Activated naive CD4-positive, alpha-beta T cell treated with anti-CD3 and anti-CD28 coated beads for 36 hours (primary cell): ENCODE measurements at regions of chr18 and their contacts with region 1.

Region 1: DNA sequence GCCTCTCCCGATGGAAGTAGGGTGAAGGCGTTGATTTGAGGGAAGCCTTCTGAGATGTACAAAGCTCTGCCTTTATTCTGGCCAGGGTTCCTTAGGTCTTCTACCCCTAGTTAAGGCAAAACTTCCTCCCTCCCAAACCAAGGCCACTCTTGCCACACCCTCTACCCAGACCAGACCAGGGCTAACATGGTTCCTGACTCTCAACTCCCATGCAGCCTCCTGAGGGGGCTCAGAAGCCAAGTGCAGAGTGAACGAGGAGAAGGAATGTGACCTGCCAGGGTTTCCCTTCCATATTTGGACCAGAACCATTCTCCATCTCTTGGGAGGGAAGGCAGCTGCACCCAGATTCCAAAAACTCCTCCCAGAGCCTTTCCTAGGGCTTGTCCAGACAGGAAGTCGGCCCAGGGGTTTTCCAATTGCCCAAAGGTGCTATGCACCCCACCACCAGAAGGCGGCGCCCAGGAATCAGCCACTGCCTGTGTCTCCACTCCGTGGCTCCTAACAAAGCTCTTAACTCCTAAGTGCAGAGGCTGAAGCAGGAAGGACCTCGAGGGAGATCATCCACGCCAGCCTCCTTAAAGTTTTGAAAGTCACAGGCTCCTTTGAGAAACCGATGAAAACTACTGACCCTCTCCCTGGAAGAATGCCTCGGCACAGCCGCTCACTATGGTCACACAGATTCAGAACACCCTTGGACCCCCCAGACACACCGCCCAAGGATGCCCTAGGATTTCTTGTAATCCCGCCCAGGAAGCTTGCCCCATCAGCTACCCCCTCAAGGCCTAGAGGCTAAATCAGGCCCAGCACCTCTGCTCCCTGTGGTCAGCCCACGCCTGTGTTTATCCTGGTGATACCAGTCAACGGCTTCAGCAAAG is 157.8 kb downstream of the SMAD2 start:
- DNase-seq: peak; percentile 75
- H3K4me3 Mint-ChIP-seq: no peak overlapping the region
- H3K27ac Mint-ChIP-seq: no peak overlapping the region
- H3K4me1 Mint-ChIP-seq: no peaks in the 10 kb centered on the region
- H3K27me3 Mint-ChIP-seq: peaks cover 4% of the 10 kb centered on the region

Region 2: DNA sequence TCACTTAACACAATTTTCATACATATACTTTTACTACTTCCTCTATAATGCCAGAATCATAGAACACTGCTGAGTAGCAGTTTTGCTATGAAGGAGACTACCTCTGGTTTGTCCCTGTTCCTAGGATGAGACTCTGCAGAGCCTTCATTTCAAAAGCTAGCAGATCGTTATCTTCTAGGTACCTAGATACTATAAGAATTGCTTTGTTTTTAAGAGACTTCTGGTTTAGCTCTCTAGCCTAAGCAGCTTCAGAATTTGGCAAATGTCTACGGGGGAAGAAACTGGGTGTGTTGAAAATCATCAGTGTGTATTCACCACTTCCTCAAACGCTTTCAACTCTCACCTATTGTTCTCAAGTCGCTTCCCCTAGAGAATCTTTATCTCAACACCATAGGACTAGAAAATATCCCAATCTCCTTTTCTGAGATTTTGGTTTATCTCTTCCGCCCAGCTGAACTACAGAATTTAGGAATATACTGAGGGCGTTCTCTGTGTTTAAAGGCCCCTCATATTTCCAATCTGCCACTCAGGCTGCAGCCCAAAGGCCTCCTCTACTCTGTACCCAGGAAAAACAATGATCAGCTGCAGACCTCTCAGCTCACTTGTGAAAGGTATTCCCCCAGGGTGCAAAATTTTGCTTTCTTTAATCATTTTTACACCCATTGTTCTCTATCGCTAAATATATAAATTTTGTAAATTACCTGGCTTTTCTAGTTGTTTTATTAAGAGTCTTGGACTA is 129.2 kb after region 1 on chr18:
- CTCF ChIA-PET with region 1: no interaction called
- intact Hi-C with region 1: no loop called
- DNase-seq: no peak
- H3K4me3 Mint-ChIP-seq: peak overlapping the region; percentile 19
- H3K27ac Mint-ChIP-seq: peak overlapping the region; percentile 67
- H3K4me1 Mint-ChIP-seq: peaks cover 74% of the 10 kb centered on the region
- H3K27me3 Mint-ChIP-seq: no peaks in the 10 kb centered on the region

Region 3: GRCh38 chr18:47997338-47997780 is 224.7 kb after region 1 on chr18:
- CTCF ChIA-PET with region 1: interaction called, 35 read pairs
- intact Hi-C with region 1: loop called (anchors 1 kb)
- DNase-seq: peak; percentile 56
- H3K4me3 Mint-ChIP-seq: no peak overlapping the region
- H3K27ac Mint-ChIP-seq: no peak overlapping the region
- H3K4me1 Mint-ChIP-seq: no peaks in the 10 kb centered on the region
- H3K27me3 Mint-ChIP-seq: no peaks in the 10 kb centered on the region

Region 4: DNA sequence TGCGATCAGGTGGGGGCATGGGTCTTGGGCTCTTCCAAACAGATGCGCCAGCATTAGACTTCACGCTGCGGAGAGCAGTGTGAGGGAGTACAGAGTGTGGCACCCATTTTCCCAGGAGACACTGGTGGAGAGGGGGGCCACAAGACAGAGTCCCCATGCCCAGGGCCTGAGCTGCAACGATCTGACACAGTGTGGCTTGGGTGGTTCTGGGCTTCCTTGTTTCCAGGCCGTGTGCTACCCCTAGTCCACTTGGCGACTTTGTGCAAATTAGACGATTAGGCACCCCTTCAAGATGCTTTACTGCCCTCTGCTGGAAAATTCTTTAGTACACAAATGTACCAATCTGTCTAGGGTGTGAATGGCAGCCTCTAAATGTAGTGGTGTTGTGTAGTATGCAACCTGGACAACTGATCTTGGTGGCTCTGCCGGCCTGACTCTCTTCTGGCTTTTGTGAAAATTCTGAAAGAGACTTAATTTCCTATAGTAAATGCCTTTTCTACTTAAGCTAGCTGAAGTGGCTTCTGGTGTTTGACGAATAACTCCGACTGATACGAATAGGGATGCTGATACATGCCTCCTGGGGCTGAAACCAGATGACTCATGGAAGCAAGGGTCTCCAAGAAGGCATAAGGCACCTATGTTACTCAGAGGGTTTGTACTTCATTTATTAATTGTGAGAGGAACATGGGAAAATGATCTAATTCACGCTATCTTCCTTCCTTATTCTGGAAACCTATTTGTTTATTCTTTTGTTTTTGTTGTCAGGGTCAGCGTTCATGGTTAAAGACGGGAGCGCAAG is 250.1 kb after region 1 on chr18:
- CTCF ChIA-PET with region 1: interaction called, 5 read pairs
- intact Hi-C with region 1: loop called (anchors 1 kb)
- DNase-seq: no peak
- H3K4me3 Mint-ChIP-seq: no peak overlapping the region
- H3K27ac Mint-ChIP-seq: no peak overlapping the region
- H3K4me1 Mint-ChIP-seq: no peaks in the 10 kb centered on the region
- H3K27me3 Mint-ChIP-seq: peaks cover 11% of the 10 kb centered on the region